Common myeloid progenitor, CD34-positive (primary cell): ENCODE measurements at regions of chr10 and their contacts with region 1.

Region 1: DNA sequence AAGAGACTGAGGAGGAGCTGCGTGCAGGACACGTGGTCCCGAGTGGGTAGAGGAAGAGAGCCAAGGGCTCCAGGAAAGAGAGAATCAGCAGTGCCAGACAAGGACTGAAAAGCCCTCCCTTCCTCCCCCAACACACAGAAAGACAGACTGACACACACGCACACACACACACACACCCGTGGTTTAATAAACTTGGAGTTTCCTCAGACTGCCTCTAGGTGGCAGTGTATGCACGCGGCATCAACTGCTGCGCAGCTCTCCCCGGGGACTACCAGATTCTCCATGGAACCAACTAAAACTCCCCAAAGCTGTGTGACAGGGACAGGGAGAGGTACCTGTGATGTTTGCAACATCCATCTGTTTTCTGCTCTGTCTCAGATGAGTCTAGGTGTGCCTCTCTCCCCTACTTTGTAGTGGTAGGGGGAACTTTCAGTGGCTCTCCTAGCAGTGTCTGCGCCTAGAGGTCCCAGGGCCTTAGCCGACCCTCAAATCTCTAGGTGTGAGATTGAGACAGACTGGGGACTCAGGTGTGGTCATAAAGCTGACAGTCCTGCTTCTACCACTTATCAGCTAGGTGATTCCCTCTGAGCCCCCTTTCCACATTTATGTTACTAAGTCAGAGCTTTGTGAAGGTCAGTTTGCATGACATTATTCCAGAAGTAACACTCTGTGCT is 9.3 kb upstream of the TSPAN14 start:
- DNase-seq: peak; percentile 73 to 89 (median 78)
- H3K4me3 ChIP-seq: no peak overlapping the region
- H3K27ac ChIP-seq: no peak overlapping the region
- H3K4me1 ChIP-seq: peaks cover 0 to 25% (median 22%) of the 10 kb centered on the region in 4 experiments
- H3K27me3 ChIP-seq: no peaks in the 10 kb centered on the region

Region 2: DNA sequence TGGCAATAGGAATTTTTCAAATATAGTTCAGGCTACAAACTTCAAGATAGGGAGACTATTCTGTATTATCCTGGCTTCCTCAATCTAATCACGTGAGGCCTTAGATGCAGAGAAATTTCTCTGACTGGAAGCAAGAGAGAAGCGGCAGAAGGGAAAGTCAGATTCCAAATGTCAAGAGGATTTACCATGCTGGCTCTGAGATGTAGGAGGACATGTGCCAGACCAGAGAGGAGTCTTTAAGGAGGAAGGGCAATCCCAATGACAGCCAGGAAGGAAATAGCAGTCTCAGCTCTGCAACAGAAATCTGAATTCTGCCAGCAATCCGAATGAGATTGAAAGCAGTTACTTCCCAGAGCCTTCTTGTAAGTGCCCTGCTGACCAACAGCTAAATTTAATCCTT is 560.8 kb before region 1 on chr10:
- CTCF ChIA-PET with region 1: no interaction called
- POLR2A ChIA-PET with region 1: no interaction called
- DNase-seq: no peak
- H3K4me3 ChIP-seq: no peak overlapping the region
- H3K27ac ChIP-seq: no peak overlapping the region
- H3K4me1 ChIP-seq: peaks cover 0 to under 1% (median 0%) of the 10 kb centered on the region in 4 experiments
- H3K27me3 ChIP-seq: no peaks in the 10 kb centered on the region

Region 3: GRCh38 chr10:80382989-80383388 is 61.8 kb before region 1 on chr10:
- CTCF ChIA-PET with region 1: interaction called, 38 read pairs
- POLR2A ChIA-PET with region 1: no interaction called
- DNase-seq: peak; percentile 70 to 86 (median 85)
- H3K4me3 ChIP-seq: peak overlapping the region in 3 of 7 experiments; percentile 19 to 33 (median 20)
- H3K27ac ChIP-seq: no peak overlapping the region
- H3K4me1 ChIP-seq: peaks cover 0 to 12% (median 6%) of the 10 kb centered on the region in 4 experiments
- H3K27me3 ChIP-seq: no peaks in the 10 kb centered on the region

Region 4: GRCh38 chr10:80421707-80422536 is 22.9 kb before region 1 on chr10:
- CTCF ChIA-PET with region 1: interaction called, 18 read pairs
- POLR2A ChIA-PET with region 1: no interaction called
- DNase-seq: peak in 2 of 3 donors; percentile 40 to 55
- H3K4me3 ChIP-seq: no peak overlapping the region
- H3K27ac ChIP-seq: no peak overlapping the region
- H3K4me1 ChIP-seq: peaks cover 0 to 10% (median 4%) of the 10 kb centered on the region in 4 experiments
- H3K27me3 ChIP-seq: no peaks in the 10 kb centered on the region

Region 5: GRCh38 chr10:80459047-80459931 is 14.5 kb after region 1 on chr10:
- CTCF ChIA-PET with region 1: interaction called, 58 read pairs
- POLR2A ChIA-PET with region 1: interaction called, 3 read pairs
- DNase-seq: peak; percentile 68 to 89 (median 85)
- H3K4me3 ChIP-seq: peak overlapping the region in 4 of 7 experiments; percentile 2 to 51 (median 24)
- H3K27ac ChIP-seq: peak overlapping the region in 1 of 2 experiments; percentile 71
- H3K4me1 ChIP-seq: peaks cover 21 to 88% (median 80%) of the 10 kb centered on the region in 4 experiments
- H3K27me3 ChIP-seq: no peaks in the 10 kb centered on the region

Region 6: DNA sequence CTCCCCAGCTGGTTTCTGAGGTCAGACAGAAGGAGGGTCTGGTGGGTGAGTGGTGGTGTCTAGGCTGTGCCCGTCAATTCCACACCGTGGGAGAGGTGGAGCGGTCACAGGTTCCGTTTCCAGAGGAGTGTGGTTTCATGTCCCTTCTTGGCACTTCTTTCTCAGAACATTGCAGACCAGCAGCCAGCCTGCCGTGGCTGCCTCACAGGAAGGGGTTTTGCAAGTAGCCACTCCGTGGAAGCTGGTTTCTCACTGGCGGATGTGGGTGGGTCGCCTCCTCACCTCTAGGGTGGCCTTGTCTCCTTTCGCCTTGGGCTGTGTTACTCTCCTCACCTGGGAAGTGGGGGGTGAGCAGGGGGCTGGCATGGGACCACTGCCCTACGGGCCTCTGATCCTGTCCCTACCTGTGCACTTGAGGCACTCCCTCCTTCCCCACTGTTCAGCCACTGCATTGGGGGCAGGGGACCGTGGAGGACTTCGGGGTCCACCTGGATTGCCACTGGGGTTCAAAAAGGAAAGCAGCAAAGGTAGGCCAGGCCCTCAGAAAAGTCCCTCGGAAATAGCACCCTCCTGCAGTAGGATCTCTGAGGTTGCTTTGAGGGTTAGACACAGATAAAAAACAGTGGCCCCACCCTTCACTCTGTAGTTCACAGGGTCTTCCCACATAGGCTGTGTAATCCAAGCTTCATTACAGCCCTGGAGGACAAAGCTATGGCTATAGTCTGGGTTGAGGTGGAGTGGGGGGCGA is 43.2 kb after region 1 on chr10:
- CTCF ChIA-PET with region 1: interaction called, 30 read pairs
- POLR2A ChIA-PET with region 1: no interaction called
- DNase-seq: peak; percentile 39 to 87 (median 81)
- H3K4me3 ChIP-seq: peak overlapping the region in 1 of 7 experiments; percentile 32
- H3K27ac ChIP-seq: peak overlapping the region in 1 of 2 experiments; percentile 54
- H3K4me1 ChIP-seq: peaks cover 22 to 69% (median 57%) of the 10 kb centered on the region in 4 experiments
- H3K27me3 ChIP-seq: no peaks in the 10 kb centered on the region

Region 7: GRCh38 chr10:80498833-80499741 is 54.3 kb after region 1 on chr10:
- CTCF ChIA-PET with region 1: interaction called, 571 read pairs
- POLR2A ChIA-PET with region 1: interaction called, 3 read pairs
- DNase-seq: peak; percentile 75 to 92 (median 90)
- H3K4me3 ChIP-seq: peak overlapping the region in 3 of 7 experiments; percentile 15 to 38 (median 20)
- H3K27ac ChIP-seq: peak overlapping the region; percentile 42 to 73
- H3K4me1 ChIP-seq: peaks cover 21 to 90% (median 64%) of the 10 kb centered on the region in 4 experiments
- H3K27me3 ChIP-seq: no peaks in the 10 kb centered on the region